ENCODE measurements at regions of chr1 and their contacts with region 1.

Region 1: DNA sequence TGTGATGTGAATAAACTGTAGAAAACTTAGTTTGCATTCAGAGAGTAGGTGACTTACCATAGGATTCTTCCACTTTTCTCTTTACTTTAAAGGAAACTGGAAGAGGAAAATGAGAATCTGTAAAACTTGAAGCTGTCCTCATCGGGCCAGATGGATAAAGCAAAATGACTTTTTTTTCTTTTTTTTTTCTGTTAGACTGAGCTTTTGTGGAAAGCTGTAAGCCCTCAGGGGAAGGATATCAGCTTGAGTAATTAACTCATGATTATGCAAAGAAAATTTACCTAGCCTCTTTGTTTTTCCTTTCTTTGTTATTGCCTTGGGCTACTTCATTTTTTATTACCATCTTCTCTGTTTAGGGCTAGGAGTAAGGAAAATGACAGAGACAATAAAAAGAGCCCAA is 53.4 kb downstream of the DPH5 start:
- DNase-seq: no peak
- H3K4me3 ChIP-seq: no peak overlapping the region
- H3K27ac ChIP-seq: no peak overlapping the region
- H3K4me1 ChIP-seq: peaks cover 5% of the 10 kb centered on the region
- H3K27me3 ChIP-seq: no peaks in the 10 kb centered on the region
- CTCF ChIP-seq: no peak
- POLR2A ChIP-seq: no peak

Region 2: GRCh38 chr1:100959502-100960060 is 12.6 kb before region 1 on chr1:
- CTCF ChIA-PET with region 1: interaction called, 14 read pairs
- POLR2A ChIA-PET with region 1: no interaction called
- dilution Hi-C with region 1: no loop called
- intact Hi-C with region 1: loop called (anchors 2 kb)
- DNase-seq: peak; percentile 85
- H3K4me3 ChIP-seq: no peak overlapping the region
- H3K27ac ChIP-seq: peak overlapping the region; percentile 62
- H3K4me1 ChIP-seq: peaks cover 31% of the 10 kb centered on the region
- H3K27me3 ChIP-seq: no peaks in the 10 kb centered on the region
- CTCF ChIP-seq: no peak
- POLR2A ChIP-seq: no peak

Region 3: DNA sequence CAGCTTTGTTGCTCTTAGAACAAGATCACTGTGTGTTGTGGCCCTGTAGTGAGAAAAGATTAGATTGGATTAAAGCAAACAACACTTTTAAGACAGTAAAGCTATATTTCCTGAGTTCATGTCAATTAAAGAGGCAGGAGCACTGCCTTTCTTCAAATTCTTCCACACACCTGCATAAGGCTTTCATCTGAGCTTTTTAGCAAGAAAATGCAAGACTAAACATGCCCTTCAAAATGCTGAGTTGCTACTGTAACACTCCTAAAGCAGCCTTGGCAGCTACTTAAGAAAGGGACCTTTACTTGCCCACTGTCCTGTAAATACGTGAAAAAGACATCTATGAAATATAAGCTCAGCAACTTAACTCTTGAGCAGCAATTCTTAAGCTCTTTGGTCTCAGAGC is 41.6 kb after region 1 on chr1:
- CTCF ChIA-PET with region 1: no interaction called
- POLR2A ChIA-PET with region 1: no interaction called
- dilution Hi-C with region 1: no loop called
- intact Hi-C with region 1: no loop called
- DNase-seq: no peak
- H3K4me3 ChIP-seq: no peak overlapping the region
- H3K27ac ChIP-seq: no peak overlapping the region
- H3K4me1 ChIP-seq: no peaks in the 10 kb centered on the region
- H3K27me3 ChIP-seq: no peaks in the 10 kb centered on the region
- CTCF ChIP-seq: no peak
- POLR2A ChIP-seq: no peak

Measured in endothelial cell of umbilical vein (primary cell).